Endothelial cell of umbilical vein (primary cell): ENCODE measurements at regions of chr7 and their contacts with region 1.

Region 1: GRCh38 chr7:100015232-100016209 is at the start of gene ZKSCAN1:
- DNase-seq: peak; percentile 89
- H3K4me3 ChIP-seq: peak within 1 kb of the TSS; percentile 92 to 100 (median 97)
- H3K27ac ChIP-seq: peak within 1 kb of the TSS; percentile 98
- H3K4me1 ChIP-seq: peaks cover 12% of the 10 kb centered on the region
- H3K27me3 ChIP-seq: no peaks in the 10 kb centered on the region
- CTCF ChIP-seq: no peak
- POLR2A ChIP-seq: peak; percentile 89
- total RNA-seq, gene ZKSCAN1: 52.8 and 57.8 TPM in 2 replicates

Region 2: DNA sequence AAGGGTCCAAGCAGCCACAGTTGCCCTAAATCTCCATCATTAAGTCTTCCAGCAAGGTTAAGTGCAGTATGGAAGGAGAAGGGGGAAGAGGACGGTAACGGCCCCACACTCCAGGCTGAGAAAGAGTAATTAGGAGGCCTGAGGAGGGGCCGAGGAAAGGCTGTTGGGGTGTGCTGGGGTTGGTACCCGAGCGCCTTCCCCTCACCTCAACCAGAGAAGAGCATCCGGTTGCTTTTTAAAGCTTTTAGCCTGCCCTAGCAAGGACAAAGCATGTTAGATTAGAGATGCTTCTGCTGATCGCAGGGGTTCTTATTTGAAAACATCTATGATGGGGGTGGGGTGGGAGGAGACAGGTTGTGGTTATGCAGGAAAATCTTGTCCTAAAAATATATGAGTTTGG is 25.1 kb after region 1 on chr7:
- CTCF ChIA-PET with region 1: no interaction called
- POLR2A ChIA-PET with region 1: no interaction called
- dilution Hi-C with region 1: no loop called
- intact Hi-C with region 1: loop called (anchors 2 kb)
- DNase-seq: no peak
- H3K4me3 ChIP-seq: no peak overlapping the region
- H3K27ac ChIP-seq: peak overlapping the region; percentile 78
- H3K4me1 ChIP-seq: peaks cover 14% of the 10 kb centered on the region
- H3K27me3 ChIP-seq: no peaks in the 10 kb centered on the region
- CTCF ChIP-seq: no peak
- POLR2A ChIP-seq: no peak

Region 3: DNA sequence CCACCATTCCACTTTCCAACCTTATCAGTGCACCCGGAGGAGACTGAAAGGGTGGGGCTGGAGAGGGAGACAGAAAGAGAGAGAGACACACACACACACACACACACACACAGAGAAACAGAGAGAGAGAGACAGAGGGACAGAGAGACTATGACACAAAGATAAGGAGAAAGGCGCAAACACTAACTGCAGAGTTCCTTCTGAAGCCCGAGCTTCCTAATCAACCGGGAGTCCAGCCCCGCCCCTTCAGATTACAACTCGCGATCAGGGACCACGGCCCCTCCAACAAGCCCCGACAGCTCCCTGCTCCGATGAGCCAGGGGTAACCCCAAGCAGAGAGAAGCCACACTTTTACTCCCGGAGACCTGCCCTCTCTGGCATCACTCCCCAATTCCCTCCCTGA is 152.4 kb after region 1 on chr7:
- CTCF ChIA-PET with region 1: no interaction called
- POLR2A ChIA-PET with region 1: no interaction called
- dilution Hi-C with region 1: no loop called
- intact Hi-C with region 1: no loop called
- DNase-seq: no peak
- H3K4me3 ChIP-seq: peak overlapping the region; percentile 34 to 67 (median 55)
- H3K27ac ChIP-seq: no peak overlapping the region
- H3K4me1 ChIP-seq: peaks cover 14% of the 10 kb centered on the region
- H3K27me3 ChIP-seq: peaks cover 5 to 15% of the 10 kb centered on the region in 2 experiments
- CTCF ChIP-seq: no peak
- POLR2A ChIP-seq: peak; percentile 28